ENCODE measurements at regions of chr17 and their contacts with region 1.

Region 1: DNA sequence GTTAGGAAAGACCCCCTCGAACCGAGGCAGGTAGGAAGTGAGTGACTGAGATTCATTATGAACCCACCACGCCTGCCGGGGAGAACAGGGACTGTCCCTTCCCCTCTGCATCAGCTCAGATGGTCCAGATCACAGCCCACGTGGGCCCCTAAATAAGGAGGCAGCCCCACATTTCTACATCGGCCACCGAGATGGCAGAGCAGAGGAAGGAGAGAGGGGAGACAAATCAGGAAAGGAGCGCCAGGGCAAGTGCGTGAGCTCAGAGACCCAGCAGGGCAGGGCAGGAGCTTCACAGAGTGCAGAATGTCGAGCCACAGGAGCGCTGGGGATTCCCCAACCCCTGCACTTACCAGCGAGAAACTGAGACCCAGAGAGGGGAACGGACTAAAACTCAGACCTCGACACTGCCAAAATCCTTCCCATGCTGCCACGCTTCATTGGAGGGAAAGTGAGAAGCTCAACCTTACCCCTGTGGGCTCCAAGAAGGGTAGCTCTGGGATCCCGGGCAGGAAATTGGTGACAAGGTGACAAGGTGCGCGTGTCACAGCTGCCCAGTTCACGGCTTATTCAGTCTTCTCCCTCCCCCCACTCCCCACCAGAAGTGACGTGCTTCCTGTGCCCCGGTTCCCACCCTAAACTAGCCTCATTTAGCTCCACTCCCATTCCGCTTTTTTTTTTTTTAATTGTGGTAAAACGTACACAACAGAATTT is at the start of gene ICAM2:
- DNase-seq: peak; percentile 78
- ATAC-seq: peak; percentile 78
- H3K4me3 Mint-ChIP-seq: peak within 1 kb of the TSS; percentile 94
- H3K27ac Mint-ChIP-seq: peak within 1 kb of the TSS; percentile 99
- H3K4me1 Mint-ChIP-seq: peaks cover 55% of the 10 kb centered on the region
- H3K27me3 Mint-ChIP-seq: no peaks in the 10 kb centered on the region
- total RNA-seq, gene ICAM2: 59.0 to 61.7 TPM

Region 2: DNA sequence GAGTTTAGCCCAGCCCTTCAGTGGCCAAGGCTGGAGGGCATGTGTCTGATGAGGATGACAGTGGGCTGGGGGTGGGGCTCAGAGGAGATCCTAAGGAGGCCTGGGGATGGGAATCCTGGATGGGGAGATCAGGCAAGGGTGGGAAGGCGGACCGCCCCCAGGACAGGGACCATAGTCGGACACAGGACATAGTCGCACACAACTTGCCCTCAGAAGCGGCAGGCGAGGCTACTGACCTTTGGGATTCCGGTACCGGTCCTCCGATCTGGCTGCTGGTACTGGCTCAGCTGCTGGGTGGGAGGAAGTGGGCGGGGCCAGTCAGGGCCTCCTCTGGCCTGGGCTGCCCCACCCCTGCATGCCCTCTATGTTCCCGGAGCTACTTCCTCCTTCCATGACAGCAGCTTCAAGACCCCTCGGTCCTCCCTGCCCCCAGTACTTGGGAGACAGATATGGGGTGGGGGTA is 89.1 kb before region 1 on chr17:
- POLR2A ChIA-PET with region 1: interaction called, 17 read pairs
- DNase-seq: peak; percentile 76
- ATAC-seq: peak; percentile 72
- H3K4me3 Mint-ChIP-seq: peak overlapping the region; percentile 94
- H3K27ac Mint-ChIP-seq: peak overlapping the region; percentile 94
- H3K4me1 Mint-ChIP-seq: peaks cover 16% of the 10 kb centered on the region
- H3K27me3 Mint-ChIP-seq: peaks cover 6% of the 10 kb centered on the region

Region 3: GRCh38 chr17:63946440-63947367 is 73.5 kb before region 1 on chr17:
- POLR2A ChIA-PET with region 1: interaction called, 11 read pairs
- DNase-seq: peak; percentile 72
- ATAC-seq: peak; percentile 89
- H3K4me3 Mint-ChIP-seq: peak overlapping the region; percentile 83
- H3K27ac Mint-ChIP-seq: peak overlapping the region; percentile 78
- H3K4me1 Mint-ChIP-seq: peaks cover 7% of the 10 kb centered on the region
- H3K27me3 Mint-ChIP-seq: peaks cover 17% of the 10 kb centered on the region

Region 4: DNA sequence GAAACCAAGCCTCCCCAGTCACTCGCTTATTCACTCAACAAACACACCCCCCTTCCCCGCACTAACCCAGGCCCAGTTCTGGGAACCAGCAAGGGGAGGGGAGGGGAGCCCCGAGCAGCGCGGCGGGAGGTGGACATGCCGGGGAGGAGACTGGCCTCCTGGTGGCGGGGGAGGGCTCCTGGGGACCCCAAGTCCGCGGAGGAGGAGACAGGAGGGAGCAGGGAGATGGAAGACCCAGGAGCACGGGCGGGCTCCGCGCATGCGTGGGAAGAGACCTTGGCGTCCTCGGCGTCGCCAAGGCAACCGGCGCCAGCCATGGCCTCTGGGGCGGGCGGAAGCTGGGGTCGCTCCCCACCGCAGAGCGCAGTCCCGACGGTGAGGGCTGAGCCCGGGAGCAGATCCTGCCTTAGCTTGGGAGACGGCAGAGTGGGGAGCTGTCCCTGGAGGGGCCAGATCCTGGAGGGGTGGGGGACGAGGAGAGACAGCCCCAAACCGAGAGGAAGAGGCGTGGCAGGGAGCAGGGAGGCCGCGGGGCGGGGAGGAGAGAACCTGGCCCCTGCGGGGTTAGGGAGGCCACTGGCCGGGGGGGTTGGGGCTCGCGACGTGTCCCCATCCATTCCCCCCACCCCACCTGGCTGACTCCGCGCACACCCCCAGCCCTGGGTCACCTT is 22.0 kb before region 1 on chr17 and contains the start of gene PRR29:
- POLR2A ChIA-PET with region 1: interaction called, 15 read pairs
- DNase-seq: peak; percentile 87
- ATAC-seq: peak; percentile 74
- H3K4me3 Mint-ChIP-seq: peak within 1 kb of the TSS; percentile 93
- H3K27ac Mint-ChIP-seq: peak within 1 kb of the TSS; percentile 82
- H3K4me1 Mint-ChIP-seq: peaks cover 16% of the 10 kb centered on the region
- H3K27me3 Mint-ChIP-seq: peaks cover 19% of the 10 kb centered on the region
- total RNA-seq, gene PRR29: 1.00 to 1.4 TPM

Region 5: DNA sequence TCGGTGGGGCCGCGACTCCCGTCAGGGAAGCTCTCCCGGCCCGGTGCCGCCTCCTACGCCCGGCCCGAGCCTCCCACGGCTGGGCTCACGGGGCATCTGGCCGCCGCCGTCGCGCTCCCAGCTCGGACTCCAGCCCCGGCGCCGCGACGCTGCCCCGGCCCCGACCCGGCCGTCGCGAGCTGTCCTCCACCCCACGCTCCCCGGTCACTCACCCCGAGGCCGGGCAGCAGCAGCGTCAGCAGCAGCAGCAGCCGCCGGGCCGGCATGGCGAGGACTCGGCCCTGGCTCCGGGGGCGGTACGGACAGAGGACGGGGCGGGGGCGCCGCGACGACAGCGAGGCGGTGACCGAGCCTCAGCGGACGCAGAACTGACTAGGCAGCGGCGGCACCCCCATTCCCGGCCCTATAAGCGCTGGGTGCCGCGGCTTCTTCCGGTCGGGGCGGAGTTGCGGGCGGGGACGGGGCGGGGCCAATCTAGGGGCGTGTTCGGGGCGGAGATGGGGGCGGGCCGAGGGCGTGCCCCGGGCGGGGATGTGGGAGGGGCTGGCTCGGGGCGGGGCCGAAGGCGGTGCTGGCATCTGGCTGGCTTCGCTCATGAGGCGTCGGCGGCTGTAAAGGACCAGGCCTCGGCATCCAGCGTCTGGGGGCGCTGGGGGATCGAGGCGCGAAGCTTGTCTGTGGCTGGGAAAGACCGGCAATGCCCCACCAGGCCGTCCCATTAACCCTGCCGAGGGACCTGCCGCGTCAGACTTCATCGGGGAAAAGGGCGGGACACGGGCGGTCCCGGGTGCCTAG is 109.8 kb after region 1 on chr17 and contains the start of gene ERN1:
- POLR2A ChIA-PET with region 1: interaction called, 17 read pairs
- DNase-seq: peak; percentile 91
- ATAC-seq: peak; percentile 93
- H3K4me3 Mint-ChIP-seq: peak within 1 kb of the TSS; percentile 88
- H3K27ac Mint-ChIP-seq: peak within 1 kb of the TSS; percentile 89
- H3K4me1 Mint-ChIP-seq: peaks cover 17% of the 10 kb centered on the region
- H3K27me3 Mint-ChIP-seq: peaks cover 3% of the 10 kb centered on the region
- total RNA-seq, gene ERN1: 38.6 to 45.3 TPM

Region 6: DNA sequence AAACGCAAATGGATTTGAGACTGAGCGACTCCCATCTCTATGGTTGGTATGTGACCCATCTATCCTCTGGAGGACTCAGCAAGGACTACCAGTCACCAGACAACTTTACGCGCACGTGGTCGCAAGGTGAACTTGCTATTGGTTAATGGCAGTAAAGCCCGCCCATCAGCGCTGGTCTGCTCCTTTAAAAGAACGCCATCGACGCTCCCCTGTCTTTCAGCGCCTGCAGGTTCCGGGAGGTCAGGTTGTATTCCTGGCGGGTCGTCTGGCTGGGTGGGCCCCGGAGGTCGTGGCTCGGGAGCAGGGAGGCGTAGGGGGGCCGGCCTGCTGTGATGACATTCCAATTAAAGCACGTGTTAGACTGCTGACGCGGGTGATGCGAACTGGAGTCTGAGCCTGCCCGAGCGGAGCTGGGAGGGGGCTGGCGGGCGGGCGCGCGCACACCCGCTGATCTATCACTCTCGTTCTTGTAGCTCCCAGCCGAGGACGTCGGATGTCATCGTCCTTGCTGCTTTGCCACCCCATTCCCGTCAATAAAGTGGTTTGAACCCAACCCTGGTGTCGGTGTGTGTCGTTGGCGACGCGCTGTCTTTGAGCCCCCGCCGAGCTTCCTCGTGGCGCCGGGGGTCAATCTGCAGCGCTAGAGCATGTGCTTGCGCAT is 125.7 kb after region 1 on chr17:
- POLR2A ChIA-PET with region 1: interaction called, 24 read pairs
- DNase-seq: peak; percentile 86
- ATAC-seq: peak; percentile 97
- H3K4me3 Mint-ChIP-seq: no peak overlapping the region
- H3K27ac Mint-ChIP-seq: no peak overlapping the region
- H3K4me1 Mint-ChIP-seq: peaks cover 25% of the 10 kb centered on the region
- H3K27me3 Mint-ChIP-seq: no peaks in the 10 kb centered on the region

Measured in activated naive CD8-positive, alpha-beta T cell treated with anti-CD3 and anti-CD28 coated beads, Interleukin-2, amount 10 ng/mL, durations not matched to agents 7 days and 5 days (primary cell).